ENCODE measurements at regions of chr11 and their contacts with region 1.

Region 1: DNA sequence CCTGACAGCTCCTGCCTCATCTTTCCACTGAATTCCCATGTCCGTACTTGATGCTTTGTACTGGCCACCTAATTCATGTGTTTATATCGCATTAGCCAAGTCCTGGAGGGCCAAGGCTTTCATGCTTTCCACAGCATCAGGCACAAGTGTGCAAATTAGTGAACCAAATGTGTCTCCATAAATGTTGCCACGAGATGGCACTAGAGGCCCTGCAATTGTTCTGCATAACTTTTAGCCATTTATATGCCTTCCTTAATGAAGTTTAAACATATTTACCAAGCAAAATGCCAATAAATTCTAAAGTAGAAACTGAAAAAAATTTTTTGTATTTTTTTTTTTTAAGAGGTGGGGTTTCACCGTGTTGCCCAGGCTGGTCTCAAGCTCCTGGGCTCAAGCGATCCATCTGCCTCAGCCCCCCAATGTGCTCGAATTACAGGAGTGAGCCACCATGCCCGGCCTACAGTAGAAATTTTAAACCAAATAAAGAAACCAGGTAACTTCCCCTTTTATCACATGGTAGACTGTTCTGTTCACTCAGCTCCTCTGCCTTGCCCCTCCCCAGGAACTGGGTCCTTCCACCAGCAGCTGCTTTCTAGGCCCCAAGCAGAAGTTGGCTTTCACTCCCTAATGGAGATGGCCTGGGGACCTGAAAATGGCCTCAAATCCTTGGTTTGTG is 20.8 kb upstream of the IL18BP start:
- DNase-seq: no peak
- ATAC-seq: peak; percentile 85

Region 2: GRCh38 chr11:71913756-71914526 is 63.9 kb before region 1 on chr11:
- intact Hi-C with region 1: no loop called
- DNase-seq: no peak
- ATAC-seq: no peak

Region 3: DNA sequence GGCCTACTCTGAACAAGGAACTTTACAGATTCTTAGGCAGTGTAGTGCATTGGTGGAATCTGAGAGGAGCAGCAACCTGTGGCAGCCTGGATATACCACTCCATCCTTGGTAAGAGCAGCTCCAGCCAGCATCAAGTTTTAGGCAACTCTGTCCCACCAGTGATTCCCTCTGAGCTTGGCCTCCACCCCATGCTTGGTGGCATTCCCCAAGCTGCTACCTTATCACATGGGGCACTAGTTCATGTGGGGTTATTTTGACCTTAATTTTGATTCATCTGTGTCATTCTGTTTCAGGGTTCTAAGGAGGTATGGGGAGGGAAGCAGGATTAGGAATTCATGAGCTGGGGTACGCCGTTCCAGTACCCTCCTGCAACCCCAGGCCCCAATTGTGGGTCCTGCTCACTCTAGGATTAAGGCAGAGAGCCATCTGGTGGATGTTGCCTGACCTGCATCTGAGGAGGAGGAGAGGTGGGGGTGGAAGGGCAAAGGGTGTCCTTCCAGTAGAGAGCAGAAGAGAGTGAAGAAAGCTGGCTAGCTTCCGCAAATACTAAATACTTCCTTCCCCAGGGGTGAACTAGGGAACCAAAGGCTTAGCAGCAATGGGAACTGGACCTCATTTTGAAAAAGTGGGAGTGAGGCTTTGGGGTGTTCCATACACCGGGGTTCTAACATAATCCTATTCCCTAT is 113.3 kb after region 1 on chr11:
- intact Hi-C with region 1: loop called (anchors 5 kb)
- DNase-seq: peak; percentile 79
- ATAC-seq: peak; percentile 93

Region 4: GRCh38 chr11:72144807-72145560 is 167.1 kb after region 1 on chr11:
- intact Hi-C with region 1: loop called (anchors 5 kb)
- DNase-seq: no peak
- ATAC-seq: no peak

Measured in Right ventricle myocardium superior (tissue), 1 donor.